ENCODE measurements at regions of chr12 and their contacts with region 1.

Region 1: DNA sequence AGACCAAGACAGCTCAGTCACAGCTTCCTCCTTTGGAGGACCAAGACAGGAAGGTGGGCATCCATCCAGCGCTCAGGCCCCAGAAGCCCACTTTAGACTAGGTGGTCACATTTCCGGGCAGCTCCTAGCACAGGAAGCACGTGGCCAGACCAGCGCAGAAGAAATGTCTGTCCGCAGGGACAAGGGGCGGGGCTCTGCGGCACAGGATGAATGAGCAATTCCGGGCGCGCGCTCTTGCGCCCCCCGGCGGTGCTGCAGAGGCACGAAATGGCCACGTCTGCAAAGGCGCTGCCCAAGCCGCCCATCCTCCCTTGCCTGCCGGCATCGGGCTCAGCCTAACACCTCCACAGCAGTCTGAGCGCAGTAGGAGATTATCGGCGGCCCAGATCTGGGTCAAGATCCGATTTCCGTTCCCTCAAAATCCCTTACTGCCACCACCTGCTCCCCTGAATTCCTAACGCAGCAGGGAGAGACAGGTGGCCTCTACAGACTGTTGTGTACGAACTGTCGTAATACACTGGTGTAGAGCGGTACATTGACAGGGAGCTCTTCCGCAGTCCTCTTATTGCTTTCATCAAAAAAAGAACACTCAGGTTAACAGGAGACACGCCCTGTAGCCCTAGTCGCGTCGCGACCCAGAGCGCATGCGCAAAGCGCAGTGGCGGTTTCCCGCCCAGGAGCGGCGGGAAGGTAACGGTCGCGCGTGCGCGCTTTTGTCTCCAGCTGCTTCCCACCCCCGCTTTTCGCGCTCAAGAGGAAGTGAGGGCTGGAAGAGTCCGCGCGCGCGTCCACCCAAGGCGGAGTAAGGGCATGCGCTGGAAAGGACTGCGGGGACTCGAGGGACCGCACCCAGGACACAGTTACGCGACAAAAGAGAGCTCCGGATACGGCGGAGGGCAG is 794 bp downstream of the TUBA1B start:
- DNase-seq: peak; percentile 95
- ATAC-seq: peak; percentile 63
- H3K4me3 Mint-ChIP-seq: peak overlapping the region; percentile 84
- H3K27ac Mint-ChIP-seq: peak overlapping the region; percentile 99
- H3K4me1 Mint-ChIP-seq: peaks cover 51% of the 10 kb centered on the region
- H3K27me3 Mint-ChIP-seq: peaks cover 6% of the 10 kb centered on the region

Region 2: DNA sequence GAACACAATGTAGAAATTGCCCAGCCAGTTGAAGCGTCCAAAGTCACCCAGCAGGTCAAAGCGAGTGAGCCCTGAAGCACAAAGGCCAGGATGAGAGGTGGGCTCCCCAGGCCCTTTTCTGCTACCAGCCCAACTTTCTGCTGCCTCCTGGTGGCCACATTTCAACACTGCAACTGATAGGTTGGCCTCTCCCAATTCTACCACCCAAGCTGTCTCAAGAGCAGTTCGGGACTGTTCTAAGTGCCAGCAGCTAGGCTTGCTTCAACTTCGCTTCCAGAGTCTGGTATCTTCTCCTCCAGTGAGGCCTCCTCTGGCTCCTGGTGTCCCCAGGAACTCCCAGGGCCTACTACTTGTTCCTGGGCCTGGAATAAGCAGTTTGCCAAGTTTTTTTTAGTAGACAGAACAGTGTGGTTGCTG is 32.4 kb before region 1 on chr12:
- CTCF ChIA-PET with region 1: interaction called, 17 read pairs
- DNase-seq: peak; percentile 77
- ATAC-seq: peak; percentile 56
- H3K4me3 Mint-ChIP-seq: no peak overlapping the region
- H3K27ac Mint-ChIP-seq: no peak overlapping the region
- H3K4me1 Mint-ChIP-seq: peaks cover 11% of the 10 kb centered on the region
- H3K27me3 Mint-ChIP-seq: peaks cover 28% of the 10 kb centered on the region

Region 3: GRCh38 chr12:49110464-49111155 is 19.8 kb before region 1 on chr12 and contains the start of gene LMBR1L:
- CTCF ChIA-PET with region 1: interaction called, 25 read pairs
- DNase-seq: peak; percentile 99
- ATAC-seq: peak; percentile 97
- H3K4me3 Mint-ChIP-seq: peak within 1 kb of the TSS; percentile 94
- H3K27ac Mint-ChIP-seq: peak within 1 kb of the TSS; percentile 87
- H3K4me1 Mint-ChIP-seq: peaks cover 28% of the 10 kb centered on the region
- H3K27me3 Mint-ChIP-seq: no peaks in the 10 kb centered on the region
- total RNA-seq, gene LMBR1L: 46.9 to 53.4 TPM

Region 4: DNA sequence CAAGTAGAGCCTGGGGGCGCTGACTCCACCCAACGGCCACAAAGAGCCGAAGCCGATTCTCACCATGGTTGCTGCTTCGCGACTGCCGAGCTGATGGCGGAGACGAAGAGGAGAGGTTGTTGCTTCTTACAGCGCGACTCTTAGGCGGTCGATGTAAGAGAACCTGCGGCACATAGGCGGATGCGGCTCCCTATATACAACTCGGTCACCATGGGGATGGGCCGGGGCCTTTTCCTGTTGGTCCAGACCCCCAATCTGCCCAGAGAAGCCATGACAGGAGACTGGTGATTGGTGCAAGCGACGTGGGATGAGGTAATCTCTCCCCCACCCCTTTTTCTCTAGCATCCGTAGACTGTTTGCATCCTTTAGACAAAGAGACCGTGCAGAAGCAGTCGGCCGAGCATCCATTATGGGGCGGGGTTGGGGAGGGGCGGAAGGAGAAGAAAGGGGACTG is 58.5 kb after region 1 on chr12 and contains the start of gene TUBA1A:
- CTCF ChIA-PET with region 1: interaction called, 31 read pairs
- DNase-seq: peak; percentile 99
- ATAC-seq: peak; percentile 88
- H3K4me3 Mint-ChIP-seq: peak within 1 kb of the TSS; percentile 95
- H3K27ac Mint-ChIP-seq: peak within 1 kb of the TSS; percentile 99
- H3K4me1 Mint-ChIP-seq: peaks cover 21% of the 10 kb centered on the region
- H3K27me3 Mint-ChIP-seq: peaks cover 2% of the 10 kb centered on the region
- total RNA-seq, gene TUBA1A: 91.0 to 96.5 TPM

Region 5: DNA sequence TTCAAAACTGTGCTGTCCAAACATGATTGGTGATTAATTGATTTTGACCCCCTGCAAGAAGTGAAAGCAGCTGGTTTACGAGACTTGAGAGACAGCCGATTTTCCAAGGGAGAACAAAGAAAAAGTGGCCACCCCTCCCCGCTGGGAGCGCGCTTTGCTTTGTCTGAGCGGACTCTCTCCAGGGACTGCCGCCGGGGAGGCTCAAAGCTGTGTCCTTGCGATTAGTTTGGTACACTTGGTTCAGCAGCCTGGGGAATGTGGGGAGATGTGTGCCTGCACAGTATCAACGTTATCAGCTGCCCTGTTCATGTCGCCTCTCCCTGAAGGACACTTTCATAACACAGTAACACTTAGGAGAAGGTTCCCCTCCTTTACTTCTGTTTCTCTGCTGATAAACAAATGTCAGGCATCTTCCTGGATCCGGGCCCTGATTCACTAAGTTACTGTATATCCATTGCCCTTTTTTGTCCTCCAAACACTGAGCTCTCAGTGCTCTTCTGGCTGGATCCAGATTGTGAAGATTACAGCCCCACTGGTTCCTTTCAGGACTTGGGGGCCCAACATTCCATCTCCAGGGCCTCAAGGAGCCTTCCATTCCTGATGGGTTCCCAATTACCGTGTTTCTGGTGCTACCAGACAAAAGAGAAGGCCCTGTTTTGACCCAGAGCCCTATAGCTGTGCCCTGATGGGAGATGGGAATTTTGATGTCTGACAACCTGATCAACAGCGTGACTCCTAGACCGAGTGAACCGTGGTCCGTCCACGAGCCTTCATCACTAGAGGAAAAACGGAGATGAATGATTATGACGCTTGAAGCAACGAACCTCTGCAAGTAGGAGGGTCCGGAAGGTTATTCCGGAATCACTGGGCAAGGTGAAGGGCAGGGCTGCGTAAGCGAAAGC is 102.8 kb after region 1 on chr12:
- CTCF ChIA-PET with region 1: interaction called, 36 read pairs
- DNase-seq: no peak
- ATAC-seq: no peak
- H3K4me3 Mint-ChIP-seq: no peak overlapping the region
- H3K27ac Mint-ChIP-seq: no peak overlapping the region
- H3K4me1 Mint-ChIP-seq: peaks cover 22% of the 10 kb centered on the region
- H3K27me3 Mint-ChIP-seq: peaks cover 6% of the 10 kb centered on the region

Measured in activated CD8-positive, alpha-beta memory T cell treated with anti-CD3 and anti-CD28 coated beads, Interleukin-2, amount 10 ng/mL, durations not matched to agents 7 days and 5 days (primary cell).